Activated T-helper 2 cell treated with anti-CD3 and anti-CD28 coated beads, Interferon-gamma antibody, Interleukin-2, Interleukin-4, amounts not matched to agents 10 μg/mL and 5 μg/mL and 100 μg/mL, durations not matched to agents 14 hours and 24 hours and 36 hours (primary cell): ENCODE measurements at regions of chr15 and their contacts with region 1.

Region 1: GRCh38 chr15:56767315-56767714 is 34.0 kb upstream of the ZNF280D start:
- DNase-seq: no peak
- H3K4me3 Mint-ChIP-seq: no peak overlapping the region
- H3K27ac Mint-ChIP-seq: peak overlapping the region; percentile 81
- H3K4me1 Mint-ChIP-seq: peaks cover 32% of the 10 kb centered on the region
- H3K27me3 Mint-ChIP-seq: no peaks in the 10 kb centered on the region

Region 2: DNA sequence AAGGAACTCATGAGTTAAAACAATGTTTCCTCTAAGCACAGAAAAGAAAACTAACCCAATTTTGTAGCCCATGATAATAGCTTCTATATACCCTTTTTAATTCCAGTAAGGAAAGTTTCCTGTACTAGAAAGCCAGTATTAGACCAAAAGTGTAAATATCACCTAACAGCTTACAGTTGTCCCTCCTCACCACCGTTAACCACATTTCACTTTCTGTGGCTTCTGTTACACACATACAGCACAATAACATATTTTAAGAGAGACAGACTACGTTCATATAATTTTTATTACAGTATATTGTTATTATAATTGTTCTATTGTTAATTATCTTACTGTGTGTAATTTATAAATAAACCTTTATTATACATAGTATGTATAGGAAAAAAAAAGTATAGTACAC is 108.1 kb before region 1 on chr15:
- intact Hi-C with region 1: no loop called
- DNase-seq: no peak
- H3K4me3 Mint-ChIP-seq: no peak overlapping the region
- H3K27ac Mint-ChIP-seq: no peak overlapping the region
- H3K4me1 Mint-ChIP-seq: peaks cover 26% of the 10 kb centered on the region
- H3K27me3 Mint-ChIP-seq: no peaks in the 10 kb centered on the region

Region 3: DNA sequence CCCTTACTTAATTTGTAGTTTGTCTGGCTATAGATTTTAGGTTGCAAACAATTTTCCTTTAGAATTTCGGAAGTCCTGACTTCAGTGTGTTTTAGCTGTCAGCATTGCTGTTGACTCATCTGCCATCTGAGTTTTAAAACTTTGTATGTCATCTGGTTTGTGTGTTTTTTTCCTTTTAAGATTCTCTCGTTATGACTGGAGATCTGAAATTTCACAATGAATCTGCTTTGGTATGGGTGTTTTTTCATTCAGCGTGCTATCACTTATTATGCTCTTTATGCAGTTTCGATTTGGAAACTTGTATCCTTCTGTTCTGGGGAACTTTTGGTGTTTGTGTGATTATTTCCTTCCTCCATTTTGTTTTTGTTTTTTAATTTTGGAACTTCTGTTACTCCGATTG is 19.7 kb after region 1 on chr15:
- intact Hi-C with region 1: loop called (anchors 1 kb)
- DNase-seq: no peak
- H3K4me3 Mint-ChIP-seq: no peak overlapping the region
- H3K27ac Mint-ChIP-seq: peak overlapping the region; percentile 70
- H3K4me1 Mint-ChIP-seq: peaks cover 16% of the 10 kb centered on the region
- H3K27me3 Mint-ChIP-seq: no peaks in the 10 kb centered on the region

Region 4: GRCh38 chr15:57306161-57306943 is 539.0 kb after region 1 on chr15:
- intact Hi-C with region 1: no loop called
- DNase-seq: peak; percentile 68
- H3K4me3 Mint-ChIP-seq: peak overlapping the region; percentile 51
- H3K27ac Mint-ChIP-seq: no peak overlapping the region
- H3K4me1 Mint-ChIP-seq: no peaks in the 10 kb centered on the region
- H3K27me3 Mint-ChIP-seq: peaks cover 6% of the 10 kb centered on the region